Right cardiac atrium (tissue), 5 donors: ENCODE measurements at regions of chr13 and their contacts with region 1.

Region 1: DNA sequence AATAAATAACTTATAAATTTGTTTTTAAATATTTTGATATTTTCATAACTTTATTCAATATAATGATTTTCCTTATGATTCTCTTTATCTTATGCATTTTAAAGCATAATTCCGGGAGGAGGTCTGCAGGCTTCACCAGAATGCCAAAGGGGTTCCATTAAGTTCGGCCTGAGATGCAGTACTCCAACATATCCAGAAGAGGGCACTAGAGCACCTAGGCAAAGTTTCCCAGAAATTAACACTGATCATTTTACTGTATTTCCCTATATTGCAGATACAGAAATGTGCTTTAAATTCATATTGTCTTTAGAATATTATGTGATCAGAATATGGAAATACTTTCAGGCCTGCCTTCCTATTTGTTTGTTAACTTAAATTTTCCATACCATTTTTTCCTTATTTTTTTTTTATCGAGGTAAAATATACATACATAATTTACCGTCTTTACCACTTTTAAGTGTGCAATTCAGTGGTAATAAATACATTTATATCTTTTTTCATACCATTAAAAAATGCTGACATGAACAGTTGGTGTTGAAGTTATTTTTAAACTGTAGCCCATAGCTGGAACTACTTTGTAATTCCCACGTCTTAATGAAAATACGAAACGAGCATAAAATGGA is 58.9 kb upstream of the TM9SF2 start:
- DNase-seq: no peak
- ATAC-seq: peak in 1 of 2 donors; percentile 55
- H3K4me3 ChIP-seq: no peak overlapping the region
- H3K27ac ChIP-seq: no peak overlapping the region
- H3K4me1 ChIP-seq: no peaks in the 10 kb centered on the region
- H3K27me3 ChIP-seq: no peaks in the 10 kb centered on the region

Region 2: DNA sequence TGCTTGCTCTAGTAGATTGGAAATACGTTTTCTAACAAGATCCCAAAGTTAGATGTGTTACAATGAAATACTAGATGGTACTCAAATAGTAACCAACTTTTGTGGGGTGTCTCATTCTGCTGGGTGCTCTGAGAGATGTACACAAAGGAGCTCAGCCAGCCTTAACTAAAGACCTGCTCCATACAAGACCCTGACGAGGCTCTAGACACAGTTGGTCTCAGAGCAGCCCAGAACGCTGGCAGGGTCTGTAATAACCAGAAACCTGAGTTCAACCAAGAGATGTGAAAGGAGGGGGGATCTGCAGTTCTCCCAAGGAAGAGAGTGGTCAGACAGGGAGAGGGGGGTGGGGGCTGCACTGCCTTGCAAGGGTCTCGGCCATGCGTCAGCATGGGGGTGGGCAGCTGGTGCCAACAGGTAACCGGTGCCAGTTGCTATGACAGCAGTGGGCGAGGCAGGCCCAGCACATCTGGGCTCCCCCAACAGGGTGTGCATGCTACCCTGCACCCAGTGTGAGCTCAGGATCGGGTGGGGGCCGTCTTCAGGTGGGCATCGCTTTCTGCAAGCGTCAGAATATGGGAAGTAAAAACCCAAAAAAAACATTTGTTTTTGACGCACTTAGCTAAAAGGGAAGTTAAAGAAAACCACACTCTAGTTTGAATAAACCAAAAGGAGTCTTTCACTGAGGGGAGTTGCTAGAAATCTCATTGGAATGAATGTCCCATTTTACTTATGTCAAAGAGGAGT is 67.2 kb before region 1 on chr13:
- intact Hi-C with region 1: no loop called
- DNase-seq: peak in 1 of 3 donors; percentile 65
- ATAC-seq: peak; percentile 38 to 49
- H3K4me3 ChIP-seq: no peak overlapping the region
- H3K27ac ChIP-seq: no peak overlapping the region
- H3K4me1 ChIP-seq: no peaks in the 10 kb centered on the region
- H3K27me3 ChIP-seq: no peaks in the 10 kb centered on the region

Region 3: DNA sequence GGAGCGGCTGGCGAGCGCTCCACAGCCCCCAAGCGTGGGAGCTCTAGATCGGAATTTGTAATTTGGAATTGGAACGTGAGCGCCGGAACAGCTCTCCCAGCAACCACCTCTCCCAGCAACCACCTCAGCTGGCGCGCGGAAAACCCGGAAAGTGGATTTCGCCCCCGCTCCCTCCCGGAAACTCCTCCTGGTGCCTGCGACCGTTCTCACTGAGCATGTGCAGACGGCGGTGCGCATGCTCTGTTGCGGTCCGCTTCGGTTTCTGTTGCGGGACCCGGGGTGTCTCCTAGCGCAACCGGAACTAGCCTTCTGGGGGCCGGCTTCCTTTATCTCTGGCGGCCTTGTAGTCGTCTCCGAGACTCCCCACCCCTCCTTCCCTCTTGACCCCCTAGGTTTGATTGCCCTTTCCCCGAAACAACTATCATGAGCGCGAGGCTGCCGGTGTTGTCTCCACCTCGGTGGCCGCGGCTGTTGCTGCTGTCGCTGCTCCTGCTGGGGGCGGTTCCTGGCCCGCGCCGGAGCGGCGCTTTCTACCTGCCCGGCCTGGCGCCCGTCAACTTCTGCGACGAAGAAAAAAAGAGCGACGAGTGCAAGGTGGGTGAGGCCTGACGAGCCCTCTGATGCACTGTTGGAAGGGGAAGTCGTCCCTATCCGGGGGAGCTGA is 58.9 kb after region 1 on chr13 and contains the start of gene TM9SF2:
- intact Hi-C with region 1: loop called in 2 of 4 experiments (anchors 5 to 10 kb)
- DNase-seq: peak; percentile 97 to 99 (median 98)
- ATAC-seq: peak; percentile 92
- H3K4me3 ChIP-seq: peak within 1 kb of the TSS; percentile 95
- H3K27ac ChIP-seq: peak within 1 kb of the TSS; percentile 94
- H3K4me1 ChIP-seq: peaks cover 3% of the 10 kb centered on the region
- H3K27me3 ChIP-seq: no peaks in the 10 kb centered on the region
- total RNA-seq, gene TM9SF2: 61.1 to 71.2 (median 66.9) TPM

Region 4: GRCh38 chr13:99542788-99543406 is 100.5 kb after region 1 on chr13:
- intact Hi-C with region 1: no loop called
- DNase-seq: no peak
- ATAC-seq: peak; percentile 53 to 71
- H3K4me3 ChIP-seq: no peak overlapping the region
- H3K27ac ChIP-seq: no peak overlapping the region
- H3K4me1 ChIP-seq: peaks cover 3% of the 10 kb centered on the region
- H3K27me3 ChIP-seq: no peaks in the 10 kb centered on the region

Region 5: DNA sequence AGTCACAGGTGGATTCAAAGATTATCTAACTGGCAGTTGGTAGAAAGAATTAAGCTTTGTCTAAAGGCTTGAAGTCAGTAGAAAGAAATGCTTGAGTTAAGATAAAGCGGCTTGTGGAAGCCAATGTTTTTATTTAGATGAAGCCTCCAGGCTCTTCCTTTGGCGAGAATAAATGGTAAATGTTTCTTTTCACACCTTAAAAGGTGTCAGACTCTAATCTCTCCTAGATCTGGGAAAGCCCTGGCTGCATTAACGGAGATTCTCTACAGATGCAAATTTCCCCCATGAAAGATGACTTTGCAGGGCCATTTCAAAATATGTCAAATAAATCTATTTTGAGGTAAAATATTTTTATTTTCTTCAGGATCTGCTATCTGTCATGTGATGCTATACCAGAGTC is 608.7 kb after region 1 on chr13:
- intact Hi-C with region 1: no loop called
- DNase-seq: no peak
- ATAC-seq: no peak
- H3K4me3 ChIP-seq: no peak overlapping the region
- H3K27ac ChIP-seq: no peak overlapping the region
- H3K4me1 ChIP-seq: no peaks in the 10 kb centered on the region
- H3K27me3 ChIP-seq: no peaks in the 10 kb centered on the region